IMR-90 (cell line): ENCODE measurements at regions of chr5 and their contacts with region 1.

Region 1: GRCh38 chr5:38809388-38810359 is 36.1 kb upstream of the OSMR start:
- DNase-seq: peak; percentile 92
- ATAC-seq: peak; percentile 74
- H3K4me3 ChIP-seq: no peak overlapping the region
- H3K27ac ChIP-seq: peak overlapping the region; percentile 65
- H3K4me1 ChIP-seq: peaks cover 20% of the 10 kb centered on the region
- H3K27me3 ChIP-seq: no peaks in the 10 kb centered on the region
- CTCF ChIP-seq: peak; percentile 99
- POLR2A ChIP-seq: peak; percentile 68
- RAD21 ChIP-seq: peak; percentile 100

Region 2: GRCh38 chr5:38265546-38266179 is 544.0 kb before region 1 on chr5:
- CTCF ChIA-PET with region 1: no interaction called
- POLR2A ChIA-PET with region 1: no interaction called
- dilution Hi-C with region 1: no loop called
- in situ Hi-C with region 1: loop called (anchors 10 kb)
- intact Hi-C with region 1: loop called (anchors 5 kb)
- DNase-seq: peak; percentile 40
- ATAC-seq: peak; percentile 92
- H3K4me3 ChIP-seq: no peak overlapping the region
- H3K27ac ChIP-seq: no peak overlapping the region
- H3K4me1 ChIP-seq: no peaks in the 10 kb centered on the region
- H3K27me3 ChIP-seq: peaks cover 16% of the 10 kb centered on the region
- CTCF ChIP-seq: peak; percentile 63
- POLR2A ChIP-seq: no peak
- RAD21 ChIP-seq: peak; percentile 32

Region 3: GRCh38 chr5:38433160-38433861 is 376.4 kb before region 1 on chr5:
- CTCF ChIA-PET with region 1: interaction called, 9 read pairs
- POLR2A ChIA-PET with region 1: no interaction called
- dilution Hi-C with region 1: no loop called
- in situ Hi-C with region 1: loop called (anchors 5 kb)
- intact Hi-C with region 1: no loop called
- DNase-seq: peak; percentile 87
- ATAC-seq: peak; percentile 82
- H3K4me3 ChIP-seq: no peak overlapping the region
- H3K27ac ChIP-seq: peak overlapping the region; percentile 44; the same call in 1 of the 2 replicates
- H3K4me1 ChIP-seq: peaks cover 24% of the 10 kb centered on the region
- H3K27me3 ChIP-seq: peaks cover 2% of the 10 kb centered on the region; the same call in 1 of the 2 replicates
- CTCF ChIP-seq: no peak
- POLR2A ChIP-seq: no peak
- RAD21 ChIP-seq: no peak

Region 4: DNA sequence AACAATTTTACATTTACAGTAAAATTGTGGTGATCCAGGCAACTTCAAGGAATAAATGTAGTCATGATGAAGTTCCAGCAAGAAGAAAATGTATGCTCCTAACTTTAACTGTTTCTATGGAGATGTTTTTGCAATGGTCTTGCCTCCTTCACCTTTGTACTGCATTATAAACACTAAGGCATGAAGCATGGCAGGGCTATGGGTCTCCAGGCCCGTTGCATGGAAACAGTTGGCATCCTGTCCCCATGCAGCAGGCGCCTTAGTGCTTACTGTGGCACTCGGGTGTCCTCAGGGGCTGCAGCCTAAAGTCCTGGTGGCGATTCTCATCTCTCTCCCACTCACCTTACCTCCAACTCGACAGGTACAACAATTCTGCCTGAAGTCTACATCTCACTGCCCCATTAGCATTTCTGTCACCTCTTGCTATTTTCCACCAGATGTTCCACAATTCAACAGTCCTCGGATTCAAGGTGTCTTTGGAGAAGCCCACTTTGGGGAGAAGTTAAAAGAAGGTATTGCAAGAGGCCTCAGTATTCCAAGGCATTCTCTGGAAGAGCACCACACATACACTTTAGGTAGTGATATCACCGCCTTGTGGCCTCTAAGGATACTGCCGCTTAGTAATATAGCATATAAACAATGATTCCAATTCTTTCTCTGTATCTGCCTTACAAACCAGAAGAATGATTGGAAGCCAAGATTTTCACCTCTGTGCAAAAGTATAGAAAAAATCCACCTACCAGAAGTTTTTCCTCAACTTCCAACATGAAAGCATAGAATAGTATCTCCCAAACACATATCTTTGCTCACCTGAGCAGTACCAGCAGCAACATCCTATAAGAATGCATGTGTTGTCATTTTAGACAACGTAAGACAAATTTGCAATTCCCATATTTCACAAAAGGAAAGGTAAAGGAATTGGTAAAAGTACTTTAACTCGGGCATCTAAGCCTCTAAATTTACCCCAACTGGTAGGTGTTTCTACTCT is 258.4 kb before region 1 on chr5:
- CTCF ChIA-PET with region 1: interaction called, 5 read pairs
- POLR2A ChIA-PET with region 1: no interaction called
- dilution Hi-C with region 1: no loop called
- in situ Hi-C with region 1: no loop called
- intact Hi-C with region 1: loop called (anchors 1 kb)
- DNase-seq: peak; percentile 73
- ATAC-seq: 0 out of 2 replicates have a peak, but pooled peaks have one; percentile 25
- H3K4me3 ChIP-seq: no peak overlapping the region
- H3K27ac ChIP-seq: no peak overlapping the region
- H3K4me1 ChIP-seq: peaks cover 13% of the 10 kb centered on the region
- H3K27me3 ChIP-seq: no peaks in the 10 kb centered on the region
- CTCF ChIP-seq: peak; percentile 71
- POLR2A ChIP-seq: no peak
- RAD21 ChIP-seq: peak; percentile 69

Region 5: DNA sequence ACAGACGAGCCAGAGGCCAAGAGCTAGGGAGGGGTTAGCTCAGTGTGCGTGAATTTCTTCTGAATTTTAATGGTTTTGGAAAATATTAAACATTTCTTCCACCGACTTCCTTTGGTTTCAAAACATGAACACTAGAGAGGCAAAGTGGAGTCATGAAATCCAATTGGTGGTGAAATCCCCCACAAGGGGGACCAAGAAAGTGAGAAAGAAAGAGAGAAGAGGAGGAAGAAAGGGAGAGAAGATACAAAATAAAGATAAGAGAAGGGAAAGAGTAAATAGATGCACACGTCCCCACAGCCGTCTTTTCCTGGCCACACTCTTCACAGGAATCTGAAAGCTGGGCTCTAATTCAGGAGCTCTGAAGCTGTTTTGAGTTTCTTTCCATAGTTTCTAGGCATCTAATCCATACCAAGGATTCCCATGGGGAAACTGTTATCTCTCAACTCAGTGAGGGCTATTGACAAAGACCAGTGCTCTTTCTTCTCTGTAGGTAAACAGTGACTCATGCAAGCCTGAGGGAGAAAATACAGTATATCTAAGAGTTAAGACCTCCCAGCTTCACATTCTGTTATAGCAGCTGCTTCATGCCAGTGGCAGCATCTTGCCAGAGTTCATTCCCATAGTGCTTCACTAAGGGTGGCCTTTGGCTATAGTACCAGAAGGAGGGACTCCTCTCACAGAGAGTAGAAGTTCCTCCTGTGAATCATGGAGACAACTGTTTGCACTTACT is 137.4 kb before region 1 on chr5:
- CTCF ChIA-PET with region 1: no interaction called
- POLR2A ChIA-PET with region 1: no interaction called
- dilution Hi-C with region 1: no loop called
- in situ Hi-C with region 1: no loop called
- intact Hi-C with region 1: loop called (anchors 2 kb)
- DNase-seq: peak; percentile 56
- ATAC-seq: peak; percentile 90
- H3K4me3 ChIP-seq: no peak overlapping the region
- H3K27ac ChIP-seq: no peak overlapping the region
- H3K4me1 ChIP-seq: peaks cover 6% of the 10 kb centered on the region; the same call in 1 of the 2 replicates
- H3K27me3 ChIP-seq: peaks cover 8% of the 10 kb centered on the region; the same call in 1 of the 2 replicates
- CTCF ChIP-seq: no peak
- POLR2A ChIP-seq: no peak
- RAD21 ChIP-seq: no peak

Region 6: GRCh38 chr5:38783011-38783561 is 26.6 kb before region 1 on chr5:
- CTCF ChIA-PET with region 1: interaction called, 7 read pairs
- POLR2A ChIA-PET with region 1: interaction called, 3 read pairs
- dilution Hi-C with region 1: no loop called
- in situ Hi-C with region 1: no loop called
- intact Hi-C with region 1: loop called (anchors 1 kb)
- DNase-seq: peak; percentile 95
- ATAC-seq: peak; percentile 92
- H3K4me3 ChIP-seq: no peak overlapping the region
- H3K27ac ChIP-seq: peak overlapping the region; percentile 64; the same call in 1 of the 2 replicates
- H3K4me1 ChIP-seq: peaks cover 9% of the 10 kb centered on the region
- H3K27me3 ChIP-seq: no peaks in the 10 kb centered on the region
- CTCF ChIP-seq: peak; percentile 15; the same call in 1 of the 2 replicates
- POLR2A ChIP-seq: no peak
- RAD21 ChIP-seq: no peak

Region 7: GRCh38 chr5:39459076-39459475 is 649.4 kb after region 1 on chr5:
- CTCF ChIA-PET with region 1: no interaction called
- POLR2A ChIA-PET with region 1: no interaction called
- dilution Hi-C with region 1: no loop called
- in situ Hi-C with region 1: no loop called
- intact Hi-C with region 1: no loop called
- DNase-seq: peak; percentile 83
- ATAC-seq: peak; percentile 60
- H3K4me3 ChIP-seq: no peak overlapping the region
- H3K27ac ChIP-seq: peak overlapping the region; percentile 33; the same call in 1 of the 2 replicates
- H3K4me1 ChIP-seq: peaks cover 7% of the 10 kb centered on the region
- H3K27me3 ChIP-seq: no peaks in the 10 kb centered on the region
- CTCF ChIP-seq: no peak
- POLR2A ChIP-seq: no peak
- RAD21 ChIP-seq: no peak